ENCODE measurements at regions of chr4 and their contacts with region 1.

Region 1: GRCh38 chr4:143207557-143207956 is 22.8 kb downstream of the USP38 start:
- DNase-seq: no peak
- H3K4me3 ChIP-seq: no peak overlapping the region
- H3K27ac ChIP-seq: no peak overlapping the region
- H3K4me1 ChIP-seq: no peaks in the 10 kb centered on the region
- H3K27me3 ChIP-seq: no peaks in the 10 kb centered on the region
- CTCF ChIP-seq: peak; percentile 9 to 42 (median 32)

Region 2: GRCh38 chr4:142801966-142802365 is 405.6 kb before region 1 on chr4:
- intact Hi-C with region 1: no loop called
- DNase-seq: no peak
- H3K4me3 ChIP-seq: no peak overlapping the region
- H3K27ac ChIP-seq: no peak overlapping the region
- H3K4me1 ChIP-seq: no peaks in the 10 kb centered on the region
- H3K27me3 ChIP-seq: no peaks in the 10 kb centered on the region
- CTCF ChIP-seq: no peak

Region 3: DNA sequence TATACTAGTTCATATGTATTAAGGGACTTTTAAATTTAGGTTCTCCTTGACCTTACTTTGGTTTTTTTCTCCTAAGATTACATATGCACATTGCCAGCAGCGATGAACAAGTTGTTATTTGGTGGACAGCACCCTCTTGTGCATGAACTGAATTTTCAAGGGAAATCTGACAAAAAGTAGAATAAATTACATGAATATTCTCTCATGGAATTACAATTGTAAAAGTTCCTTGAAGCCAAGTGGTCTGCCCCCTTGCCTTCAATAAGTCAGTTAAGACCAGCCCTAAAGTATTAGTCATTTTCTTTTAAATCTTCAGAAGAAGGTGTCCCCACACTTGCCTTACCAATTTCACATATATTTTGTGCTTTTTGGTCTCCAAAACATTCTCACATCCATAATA is 275.3 kb after region 1 on chr4:
- intact Hi-C with region 1: loop called (anchors 2 kb)
- DNase-seq: no peak
- H3K4me3 ChIP-seq: no peak overlapping the region
- H3K27ac ChIP-seq: no peak overlapping the region
- H3K4me1 ChIP-seq: no peaks in the 10 kb centered on the region
- H3K27me3 ChIP-seq: no peaks in the 10 kb centered on the region
- CTCF ChIP-seq: peak; percentile 36 to 73 (median 53)

Measured in ascending aorta (tissue), 2 donors.